Activated CD4-positive, alpha-beta T cell treated with anti-CD3 and anti-CD28 coated beads, Interleukin-2, amount 10 ng/mL, durations not matched to agents 7 days and 5 days (primary cell): ENCODE measurements at regions of chr3 and their contacts with region 1.

Region 1: GRCh38 chr3:37979541-37980461 is 10.8 kb upstream of the VILL start:
- DNase-seq: no peak
- H3K4me3 Mint-ChIP-seq: no peak overlapping the region
- H3K27ac Mint-ChIP-seq: no peak overlapping the region
- H3K4me1 Mint-ChIP-seq: peaks cover 3% of the 10 kb centered on the region
- H3K27me3 Mint-ChIP-seq: no peaks in the 10 kb centered on the region

Region 2: DNA sequence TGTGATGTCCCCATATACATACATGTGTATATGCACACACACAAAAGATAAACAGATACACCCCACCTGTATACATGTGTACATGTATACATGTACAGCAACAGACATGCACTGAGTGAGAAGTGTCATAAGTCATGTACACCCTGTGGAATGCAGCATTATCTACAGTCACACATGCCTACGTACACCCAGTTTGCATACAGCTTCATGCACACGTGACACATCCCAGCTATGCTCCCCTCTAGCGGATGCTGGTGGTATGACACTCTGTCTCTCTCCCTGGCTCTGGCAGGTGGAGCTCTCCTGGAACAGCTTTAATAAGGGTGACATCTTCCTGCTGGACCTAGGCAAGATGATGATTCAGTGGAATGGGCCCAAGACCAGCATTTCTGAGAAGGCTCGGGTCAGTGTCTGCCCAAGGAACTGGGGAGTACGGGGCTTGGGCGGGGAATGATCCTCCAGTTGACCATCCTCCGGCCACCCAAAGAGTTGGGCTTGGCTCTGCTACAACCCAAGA is 17.0 kb after region 1 on chr3:
- CTCF ChIA-PET with region 1: interaction called, 10 read pairs
- POLR2A ChIA-PET with region 1: no interaction called
- DNase-seq: peak; percentile 87
- H3K4me3 Mint-ChIP-seq: peak overlapping the region; percentile 17
- H3K27ac Mint-ChIP-seq: peak overlapping the region; percentile 95
- H3K4me1 Mint-ChIP-seq: peaks cover 62% of the 10 kb centered on the region
- H3K27me3 Mint-ChIP-seq: no peaks in the 10 kb centered on the region